ENCODE measurements at regions of chr2 and their contacts with region 1.

Region 1: DNA sequence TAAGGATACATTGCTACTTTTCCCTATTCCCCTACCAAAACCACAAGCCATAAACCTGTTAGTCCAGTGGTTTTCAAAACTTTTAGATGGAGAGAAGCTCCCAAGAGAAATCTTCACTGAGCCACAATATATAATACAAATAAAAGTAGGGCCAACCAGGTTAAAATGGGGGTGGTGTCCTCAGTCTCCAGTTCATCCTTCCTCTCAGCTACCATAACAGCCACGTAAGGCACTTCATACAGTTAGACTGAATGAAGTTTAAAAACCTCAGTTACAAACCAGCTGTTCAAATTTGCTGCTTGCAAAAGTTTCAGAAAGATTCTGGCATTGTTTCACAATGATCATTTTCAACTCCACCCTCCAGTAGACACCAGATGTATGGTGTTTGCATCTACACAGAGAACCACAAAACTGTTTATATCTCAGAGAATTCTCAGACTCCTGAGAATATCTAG is 26.0 kb downstream of the SOS1 start:
- DNase-seq: peak; percentile 53
- CTCF ChIP-seq: no peak

Region 2: GRCh38 chr2:39107719-39108273 is 12.9 kb after region 1 on chr2:
- CTCF ChIA-PET with region 1: interaction called, 11 read pairs
- POLR2A ChIA-PET with region 1: no interaction called
- DNase-seq: no peak
- CTCF ChIP-seq: no peak